ENCODE measurements at regions of chr9 and their contacts with region 1.

Region 1: GRCh38 chr9:27333241-27334052 is 36.5 kb upstream of the EQTN start:
- DNase-seq: peak; percentile 78
- H3K4me3 Mint-ChIP-seq: no peak overlapping the region
- H3K27ac Mint-ChIP-seq: no peak overlapping the region
- H3K4me1 Mint-ChIP-seq: peaks cover 22% of the 10 kb centered on the region
- H3K27me3 Mint-ChIP-seq: no peaks in the 10 kb centered on the region
- CTCF ChIP-seq: peak; percentile 82

Region 2: DNA sequence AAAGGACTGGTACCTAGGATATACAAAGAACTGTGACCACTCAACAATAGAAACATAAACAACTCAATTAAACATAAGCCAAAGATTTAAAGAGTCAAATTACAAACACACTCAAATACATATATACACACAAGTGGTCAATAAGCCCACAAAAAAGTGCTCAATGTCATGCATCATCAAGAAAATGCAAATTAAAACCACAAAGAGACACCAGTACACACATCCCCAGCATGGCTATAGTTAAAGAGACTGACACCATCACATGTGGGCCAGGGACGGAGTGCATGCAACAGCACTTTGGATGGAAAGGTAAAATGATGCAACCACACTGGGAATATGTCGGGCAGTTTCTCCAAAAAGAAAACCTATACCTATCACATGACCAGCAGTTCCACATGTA is 530.5 kb before region 1 on chr9:
- CTCF ChIA-PET with region 1: no interaction called
- POLR2A ChIA-PET with region 1: no interaction called
- intact Hi-C with region 1: no loop called
- DNase-seq: no peak
- H3K4me3 Mint-ChIP-seq: no peak overlapping the region
- H3K27ac Mint-ChIP-seq: no peak overlapping the region
- H3K4me1 Mint-ChIP-seq: no peaks in the 10 kb centered on the region
- H3K27me3 Mint-ChIP-seq: no peaks in the 10 kb centered on the region
- CTCF ChIP-seq: no peak

Region 3: DNA sequence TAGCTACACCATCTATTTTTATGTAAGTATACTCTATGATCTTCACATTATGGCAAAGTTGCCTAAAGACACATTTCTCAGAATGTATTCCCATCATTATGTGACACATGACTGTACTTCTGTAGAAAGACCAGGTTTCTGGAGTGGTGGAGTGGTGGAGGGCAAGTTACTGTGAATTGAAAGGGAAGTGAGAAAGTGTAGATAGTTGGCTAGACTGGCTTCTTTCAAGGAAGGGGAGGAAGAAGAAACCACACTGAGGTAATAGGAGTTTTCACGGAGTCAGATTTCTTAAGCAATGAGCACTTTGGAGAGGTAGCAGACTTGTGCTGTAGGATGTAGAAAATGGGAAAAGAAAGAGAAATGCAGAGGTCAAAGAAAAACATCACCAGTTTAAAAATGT is 14.4 kb after region 1 on chr9:
- CTCF ChIA-PET with region 1: interaction called, 20 read pairs
- POLR2A ChIA-PET with region 1: no interaction called
- intact Hi-C with region 1: no loop called
- DNase-seq: no peak
- H3K4me3 Mint-ChIP-seq: no peak overlapping the region
- H3K27ac Mint-ChIP-seq: no peak overlapping the region
- H3K4me1 Mint-ChIP-seq: peaks cover 10% of the 10 kb centered on the region
- H3K27me3 Mint-ChIP-seq: no peaks in the 10 kb centered on the region
- CTCF ChIP-seq: no peak

Region 4: DNA sequence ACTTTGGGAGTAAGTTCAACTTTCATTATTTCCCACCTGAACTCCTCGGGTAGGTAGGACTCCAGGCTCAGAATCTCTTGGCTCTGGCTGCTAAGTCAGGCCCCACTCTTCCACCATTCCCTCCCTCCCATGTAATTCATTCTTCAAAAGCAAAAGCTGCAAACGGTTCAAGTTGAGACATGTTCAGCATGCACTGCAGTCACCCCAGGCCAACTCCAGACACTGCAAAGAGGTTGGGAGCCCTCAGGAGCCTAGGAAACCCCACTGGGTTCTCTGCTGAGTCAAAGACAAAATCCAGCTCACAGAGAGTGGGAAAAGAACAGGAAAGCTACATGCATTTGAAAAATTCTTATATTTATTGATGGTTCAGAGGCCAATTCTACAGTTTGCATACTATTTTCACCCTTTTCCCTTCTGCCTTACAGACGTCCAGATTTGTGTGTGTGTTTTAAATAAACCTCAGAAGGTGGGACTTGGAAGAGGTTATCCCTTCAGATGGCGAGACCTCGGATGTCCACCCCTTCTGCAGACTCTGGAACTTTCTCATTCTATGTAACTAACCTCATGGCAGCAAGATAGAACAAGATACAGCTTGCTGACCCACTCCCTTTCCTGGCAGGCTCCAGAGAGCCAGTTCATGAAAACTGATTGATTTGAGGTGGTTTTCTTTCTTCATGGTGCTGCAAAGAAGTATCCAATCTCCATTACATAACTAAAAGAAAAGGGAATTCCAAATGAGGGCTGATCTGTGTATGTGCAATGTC is 29.2 kb after region 1 on chr9:
- CTCF ChIA-PET with region 1: interaction called, 19 read pairs
- POLR2A ChIA-PET with region 1: interaction called, 3 read pairs
- intact Hi-C with region 1: no loop called
- DNase-seq: peak; percentile 74
- H3K4me3 Mint-ChIP-seq: no peak overlapping the region
- H3K27ac Mint-ChIP-seq: peak overlapping the region; percentile 55
- H3K4me1 Mint-ChIP-seq: peaks cover 9% of the 10 kb centered on the region
- H3K27me3 Mint-ChIP-seq: no peaks in the 10 kb centered on the region
- CTCF ChIP-seq: no peak

Region 5: GRCh38 chr9:27539479-27540441 is 206.3 kb after region 1 on chr9:
- CTCF ChIA-PET with region 1: interaction called, 91 read pairs
- POLR2A ChIA-PET with region 1: interaction called, 12 read pairs
- intact Hi-C with region 1: no loop called
- DNase-seq: peak; percentile 90
- H3K4me3 Mint-ChIP-seq: peak overlapping the region; percentile 63
- H3K27ac Mint-ChIP-seq: peak overlapping the region; percentile 98
- H3K4me1 Mint-ChIP-seq: peaks cover 32% of the 10 kb centered on the region
- H3K27me3 Mint-ChIP-seq: no peaks in the 10 kb centered on the region
- CTCF ChIP-seq: no peak

Region 6: GRCh38 chr9:27548055-27548741 is 214.8 kb after region 1 on chr9:
- CTCF ChIA-PET with region 1: interaction called, 91 read pairs
- POLR2A ChIA-PET with region 1: interaction called, 18 read pairs
- intact Hi-C with region 1: loop called (anchors 1 kb)
- DNase-seq: peak; percentile 59
- H3K4me3 Mint-ChIP-seq: no peak overlapping the region
- H3K27ac Mint-ChIP-seq: peak overlapping the region; percentile 54
- H3K4me1 Mint-ChIP-seq: no peaks in the 10 kb centered on the region
- H3K27me3 Mint-ChIP-seq: no peaks in the 10 kb centered on the region
- CTCF ChIP-seq: peak; percentile 48

Region 7: GRCh38 chr9:27664121-27664779 is 330.8 kb after region 1 on chr9:
- CTCF ChIA-PET with region 1: no interaction called
- POLR2A ChIA-PET with region 1: no interaction called
- intact Hi-C with region 1: no loop called
- DNase-seq: no peak
- H3K4me3 Mint-ChIP-seq: no peak overlapping the region
- H3K27ac Mint-ChIP-seq: no peak overlapping the region
- H3K4me1 Mint-ChIP-seq: peaks cover 6% of the 10 kb centered on the region
- H3K27me3 Mint-ChIP-seq: peaks cover 13% of the 10 kb centered on the region
- CTCF ChIP-seq: no peak

Region 8: DNA sequence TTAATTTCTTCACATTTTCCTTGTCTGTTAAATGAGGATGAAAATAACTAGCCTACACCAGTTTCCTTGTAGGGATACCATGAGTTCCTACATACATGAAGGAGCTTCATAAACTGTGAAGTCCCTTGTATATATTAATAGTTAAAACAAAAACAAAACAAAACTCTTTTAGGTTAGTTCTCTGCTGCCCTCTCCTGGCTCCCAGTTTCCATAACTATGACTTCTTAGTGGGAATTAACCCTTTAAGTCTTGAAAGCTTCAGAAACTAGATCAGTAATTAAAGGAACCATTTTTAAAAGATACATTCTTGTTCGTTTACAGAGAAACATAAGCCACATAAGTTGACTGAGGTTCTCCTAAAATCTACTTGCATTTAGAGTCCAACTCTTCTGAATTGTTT is 739.8 kb after region 1 on chr9:
- CTCF ChIA-PET with region 1: interaction called, 7 read pairs
- POLR2A ChIA-PET with region 1: no interaction called
- intact Hi-C with region 1: loop called (anchors 1 kb)
- DNase-seq: peak; percentile 65
- H3K4me3 Mint-ChIP-seq: no peak overlapping the region
- H3K27ac Mint-ChIP-seq: no peak overlapping the region
- H3K4me1 Mint-ChIP-seq: no peaks in the 10 kb centered on the region
- H3K27me3 Mint-ChIP-seq: peaks cover 17% of the 10 kb centered on the region
- CTCF ChIP-seq: peak; percentile 75

Measured in MCF 10A (cell line).